ENCODE measurements at regions of chr18 and their contacts with region 1.

Region 1: GRCh38 chr18:8899000-8899399 is 193.6 kb downstream of the MTCL1 start:
- DNase-seq: no peak
- H3K4me3 ChIP-seq: no peak overlapping the region
- H3K27ac ChIP-seq: no peak overlapping the region
- H3K4me1 ChIP-seq: no peaks in the 10 kb centered on the region
- H3K27me3 ChIP-seq: no peaks in the 10 kb centered on the region
- CTCF ChIP-seq: no peak
- EP300 ChIP-seq: no peak
- POLR2A ChIP-seq: no peak

Region 2: DNA sequence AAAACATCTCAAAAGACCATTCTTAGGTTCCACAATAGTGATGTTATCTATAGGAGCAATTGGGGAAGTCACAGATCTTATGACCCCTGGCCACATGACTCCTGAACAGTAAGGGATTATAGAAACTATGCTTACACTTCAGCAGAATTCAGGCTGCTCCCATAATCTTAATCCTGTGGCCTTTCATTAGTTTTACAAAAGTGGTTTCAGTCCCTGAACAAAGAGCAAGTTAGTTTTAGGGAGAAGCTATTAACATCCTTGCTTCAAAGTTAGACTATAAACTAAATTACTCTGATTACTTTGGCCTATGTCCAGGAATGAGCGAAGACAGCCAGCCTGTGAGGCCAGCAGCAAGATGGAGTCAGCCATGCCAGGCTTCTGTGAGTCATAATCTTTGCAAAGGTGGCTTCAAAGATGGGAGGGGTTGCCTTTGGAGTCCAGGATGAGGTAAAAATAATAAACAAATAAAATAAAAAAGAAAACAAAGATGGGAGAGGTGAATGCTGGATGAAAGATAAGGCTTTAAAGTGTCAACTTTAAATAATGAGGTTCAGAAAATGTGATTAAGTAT is 34.8 kb after region 1 on chr18:
- intact Hi-C with region 1: loop called in 1 of 4 experiments (anchors 2 kb)
- DNase-seq: no peak
- H3K4me3 ChIP-seq: no peak overlapping the region
- H3K27ac ChIP-seq: no peak overlapping the region
- H3K4me1 ChIP-seq: no peaks in the 10 kb centered on the region
- H3K27me3 ChIP-seq: no peaks in the 10 kb centered on the region
- CTCF ChIP-seq: no peak
- EP300 ChIP-seq: no peak
- POLR2A ChIP-seq: no peak

Measured in ovary (tissue), 10 donors.